ENCODE measurements at regions of chr5 and their contacts with region 1.

Region 1: DNA sequence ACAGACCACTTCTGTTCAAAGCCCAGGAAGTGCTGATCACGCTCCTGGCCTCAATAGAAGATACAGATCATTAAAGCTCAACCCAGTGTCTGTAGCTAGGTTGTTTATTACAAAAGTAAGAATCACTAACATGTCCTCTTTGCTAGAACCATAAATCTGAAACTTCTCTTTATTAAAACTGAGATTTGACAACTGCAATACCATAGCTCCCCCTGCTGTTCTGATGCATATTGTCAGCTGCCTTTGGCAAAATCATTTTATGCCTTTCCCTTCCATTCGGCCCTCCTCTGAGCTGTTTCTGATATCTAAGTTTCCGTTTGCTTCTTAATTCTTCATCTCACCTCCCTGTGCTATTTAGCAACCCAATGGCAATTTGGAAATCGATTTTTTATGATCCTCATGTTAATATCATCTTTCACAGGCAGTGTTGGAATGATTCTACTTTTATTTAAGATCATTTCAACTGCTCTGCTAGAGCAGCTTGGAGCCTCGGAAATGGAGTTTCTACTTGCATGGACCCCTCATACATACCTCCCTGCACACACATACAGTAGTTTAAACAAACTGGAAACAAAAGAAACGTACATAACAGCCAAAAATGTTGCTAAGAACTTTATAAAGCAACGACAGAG is 998.8 kb downstream of the MAT2B start:
- DNase-seq: peak; percentile 21
- H3K4me3 ChIP-seq: no peak overlapping the region; a peak in 1 of 4 replicates
- H3K27ac ChIP-seq: peak overlapping the region in 1 of 2 experiments; percentile 83; a peak in 2 of 4 replicates
- H3K4me1 ChIP-seq: peaks cover 0 to 9% of the 10 kb centered on the region in 2 experiments; a peak in 2 of 4 replicates
- H3K27me3 ChIP-seq: no peaks in the 10 kb centered on the region
- CTCF ChIP-seq: peak; percentile 90
- EP300 ChIP-seq: peak in 1 of 2 experiments; percentile 22; a peak in 1 of 4 replicates
- RAD21 ChIP-seq: peak; percentile 95

Region 2: DNA sequence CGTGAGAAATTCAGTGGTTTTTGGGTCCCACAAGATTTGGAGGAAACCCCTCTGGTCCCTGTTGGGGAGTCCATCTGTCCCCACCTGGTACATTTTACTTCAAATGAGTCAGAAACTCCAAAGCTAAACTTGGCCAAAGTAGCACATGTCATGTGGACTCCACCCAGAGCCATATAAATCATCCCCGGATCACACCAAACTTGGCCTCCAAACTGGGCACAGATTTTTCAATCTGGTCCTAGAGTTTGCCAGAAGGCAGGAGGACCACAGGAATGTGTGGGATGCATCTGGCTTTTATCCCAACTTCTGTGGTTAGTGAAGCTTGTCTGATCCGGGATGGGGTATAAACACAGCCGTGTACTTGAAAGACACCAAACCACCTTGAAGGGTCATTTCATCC is 932.5 kb before region 1 on chr5:
- CTCF ChIA-PET with region 1: interaction called, 29 read pairs
- POLR2A ChIA-PET with region 1: no interaction called
- DNase-seq: peak; percentile 26
- H3K4me3 ChIP-seq: no peak overlapping the region
- H3K27ac ChIP-seq: peak overlapping the region in 1 of 2 experiments; percentile 66; a peak in 2 of 4 replicates
- H3K4me1 ChIP-seq: peaks cover 11 to 16% of the 10 kb centered on the region in 2 experiments
- H3K27me3 ChIP-seq: no peaks in the 10 kb centered on the region
- CTCF ChIP-seq: no peak
- EP300 ChIP-seq: peak; percentile 80 to 95
- RAD21 ChIP-seq: no peak

Region 3: GRCh38 chr5:164048359-164048926 is 455.8 kb before region 1 on chr5:
- CTCF ChIA-PET with region 1: interaction called, 13 read pairs
- POLR2A ChIA-PET with region 1: no interaction called
- DNase-seq: peak; percentile 3
- H3K4me3 ChIP-seq: no peak overlapping the region
- H3K27ac ChIP-seq: no peak overlapping the region
- H3K4me1 ChIP-seq: peaks cover 0 to 9% of the 10 kb centered on the region in 2 experiments; a peak in 1 of 4 replicates
- H3K27me3 ChIP-seq: no peaks in the 10 kb centered on the region
- CTCF ChIP-seq: peak; percentile 73
- EP300 ChIP-seq: no peak
- RAD21 ChIP-seq: peak; percentile 84

Region 4: DNA sequence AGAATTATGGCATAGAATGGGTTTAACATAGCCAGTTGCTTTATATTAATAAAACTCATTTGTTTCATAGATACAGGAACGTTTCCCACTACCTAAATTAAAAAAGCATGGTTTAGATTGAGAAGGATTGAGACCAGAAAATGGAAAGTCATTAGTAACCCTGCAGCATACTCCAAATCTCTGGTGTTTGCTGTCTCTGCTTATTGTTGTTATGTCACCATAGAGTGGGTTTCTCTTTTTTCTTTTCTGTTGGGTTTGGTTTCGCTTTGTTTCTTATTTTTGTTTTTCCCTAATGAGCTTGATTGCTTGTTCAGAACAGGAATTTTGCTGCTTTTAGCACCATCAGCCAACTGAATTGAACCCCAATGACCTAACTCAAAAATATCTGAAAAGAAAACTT is 35.9 kb after region 1 on chr5:
- CTCF ChIA-PET with region 1: no interaction called
- POLR2A ChIA-PET with region 1: no interaction called
- DNase-seq: no peak
- H3K4me3 ChIP-seq: no peak overlapping the region
- H3K27ac ChIP-seq: peak overlapping the region in 1 of 2 experiments; percentile 22; a peak in 1 of 4 replicates
- H3K4me1 ChIP-seq: no peaks in the 10 kb centered on the region
- H3K27me3 ChIP-seq: no peaks in the 10 kb centered on the region
- CTCF ChIP-seq: no peak
- EP300 ChIP-seq: no peak
- RAD21 ChIP-seq: no peak

Region 5: GRCh38 chr5:164578911-164579310 is 74.7 kb after region 1 on chr5:
- CTCF ChIA-PET with region 1: interaction called, 20 read pairs
- POLR2A ChIA-PET with region 1: no interaction called
- DNase-seq: peak; percentile 60
- H3K4me3 ChIP-seq: no peak overlapping the region
- H3K27ac ChIP-seq: peak overlapping the region; percentile 25 to 100; a peak in 3 of 4 replicates
- H3K4me1 ChIP-seq: peaks cover 0 to 21% of the 10 kb centered on the region in 2 experiments; a peak in 2 of 4 replicates
- H3K27me3 ChIP-seq: no peaks in the 10 kb centered on the region
- CTCF ChIP-seq: no peak
- EP300 ChIP-seq: peak; percentile 55 to 100; a peak in 3 of 4 replicates
- RAD21 ChIP-seq: peak; percentile 51